MCF 10A (cell line): ENCODE measurements at regions of chrX and their contacts with region 1.

Region 1: DNA sequence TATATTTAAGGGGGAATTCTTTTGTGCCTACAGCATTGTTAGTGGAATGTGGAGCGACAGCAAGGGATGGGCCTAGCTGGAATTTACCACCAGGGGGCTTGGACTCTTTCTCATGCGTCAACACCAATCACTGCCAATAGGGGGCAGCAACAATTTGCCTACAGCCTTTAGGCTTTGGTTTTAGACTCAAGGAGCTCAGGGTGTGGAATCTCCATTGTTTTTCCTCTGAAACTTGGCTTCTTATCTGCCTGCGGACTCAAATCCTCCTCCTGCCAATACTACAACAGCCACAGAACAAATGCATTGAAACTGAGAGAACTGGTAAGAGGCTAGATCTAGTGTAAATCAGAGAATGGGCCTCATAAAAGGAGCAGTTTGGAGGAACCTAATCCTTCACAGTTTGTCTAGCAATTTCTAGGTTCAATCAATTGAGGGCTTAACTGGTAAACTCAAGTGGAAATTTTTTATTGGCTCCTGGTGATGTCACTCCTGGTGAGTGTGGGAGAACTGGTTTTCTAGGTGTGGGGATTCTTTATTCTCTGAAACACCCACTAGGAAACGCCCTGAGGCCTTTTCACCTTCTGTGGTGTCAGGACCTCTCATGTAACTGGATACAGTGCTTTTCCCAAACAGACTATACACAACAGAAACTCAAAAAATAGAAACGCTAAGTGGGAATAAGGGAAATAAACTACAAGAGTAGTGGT is 27.9 kb upstream of the TMSB4X start:
- DNase-seq: peak; percentile 91
- H3K4me3 Mint-ChIP-seq: no peak overlapping the region
- H3K27ac Mint-ChIP-seq: peak overlapping the region; percentile 80
- H3K4me1 Mint-ChIP-seq: peaks cover 12% of the 10 kb centered on the region
- H3K27me3 Mint-ChIP-seq: peaks cover 27% of the 10 kb centered on the region
- CTCF ChIP-seq: peak; percentile 98

Region 2: DNA sequence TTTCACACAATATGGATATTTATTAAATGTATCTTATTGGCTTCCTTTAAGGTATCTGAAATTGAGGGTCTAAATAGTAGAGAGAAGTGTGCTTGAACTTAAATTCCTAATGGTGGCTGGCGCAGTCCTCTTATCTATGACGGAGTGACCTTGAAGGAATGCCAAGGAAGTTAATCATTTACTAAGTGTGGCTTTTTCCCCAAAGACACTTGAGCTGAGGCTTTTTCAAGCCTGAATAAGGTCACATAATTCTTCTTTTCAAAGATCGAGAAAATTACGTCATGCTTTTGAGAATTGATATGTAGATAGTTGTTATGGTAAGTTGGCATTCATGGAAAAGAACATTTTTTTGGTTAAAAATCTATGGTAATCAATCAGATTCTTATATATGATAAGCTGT is 167.5 kb before region 1 on chrX:
- CTCF ChIA-PET with region 1: no interaction called
- POLR2A ChIA-PET with region 1: no interaction called
- intact Hi-C with region 1: no loop called
- DNase-seq: no peak
- H3K4me3 Mint-ChIP-seq: no peak overlapping the region
- H3K27ac Mint-ChIP-seq: no peak overlapping the region
- H3K4me1 Mint-ChIP-seq: no peaks in the 10 kb centered on the region
- H3K27me3 Mint-ChIP-seq: peaks cover 72% of the 10 kb centered on the region
- CTCF ChIP-seq: no peak

Region 3: DNA sequence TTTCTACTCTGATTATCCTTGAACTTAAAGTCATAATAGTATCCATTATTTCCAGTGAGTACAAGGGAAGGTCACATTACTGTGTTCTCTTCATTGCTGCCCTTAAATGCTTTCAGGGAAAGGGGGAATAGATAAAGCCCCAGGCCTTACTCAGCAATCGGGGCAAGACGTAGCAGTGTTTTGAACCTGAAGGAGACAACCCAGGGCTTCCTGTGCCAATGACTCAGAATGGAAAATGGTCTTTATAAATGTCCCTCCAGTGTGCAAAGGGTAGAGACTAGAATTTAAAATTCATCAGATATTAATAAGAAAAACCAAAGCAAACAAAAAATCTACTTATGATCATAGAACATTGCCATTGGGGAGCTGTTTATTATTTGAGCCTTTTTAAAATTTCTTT is 16.8 kb before region 1 on chrX:
- CTCF ChIA-PET with region 1: interaction called, 10 read pairs
- POLR2A ChIA-PET with region 1: no interaction called
- intact Hi-C with region 1: no loop called
- DNase-seq: no peak
- H3K4me3 Mint-ChIP-seq: no peak overlapping the region
- H3K27ac Mint-ChIP-seq: no peak overlapping the region
- H3K4me1 Mint-ChIP-seq: no peaks in the 10 kb centered on the region
- H3K27me3 Mint-ChIP-seq: peaks cover 19% of the 10 kb centered on the region
- CTCF ChIP-seq: no peak

Region 4: DNA sequence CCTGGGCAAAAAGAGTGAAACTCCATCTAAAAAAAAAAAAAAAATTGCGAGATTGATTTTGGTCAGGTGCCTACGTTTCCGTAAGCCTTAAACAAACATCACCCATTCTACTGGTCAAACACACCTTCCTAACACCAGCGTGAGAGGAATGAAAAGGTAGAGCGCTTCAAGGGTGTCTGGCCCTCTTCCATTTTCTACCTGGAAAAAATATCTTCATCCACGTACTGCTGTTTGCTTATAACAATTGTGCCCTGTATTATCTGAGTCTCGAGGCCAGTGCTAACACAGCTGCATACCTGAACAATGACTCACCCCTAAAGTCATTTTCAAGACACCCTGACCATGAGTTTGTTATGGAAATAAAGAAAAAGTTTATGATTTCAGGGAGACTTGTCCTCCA is 41.8 kb after region 1 on chrX:
- CTCF ChIA-PET with region 1: interaction called, 11 read pairs
- POLR2A ChIA-PET with region 1: no interaction called
- intact Hi-C with region 1: no loop called
- DNase-seq: peak; percentile 88
- H3K4me3 Mint-ChIP-seq: peak overlapping the region; percentile 59
- H3K27ac Mint-ChIP-seq: peak overlapping the region; percentile 42
- H3K4me1 Mint-ChIP-seq: peaks cover 26% of the 10 kb centered on the region
- H3K27me3 Mint-ChIP-seq: peaks cover 13% of the 10 kb centered on the region
- CTCF ChIP-seq: no peak

Region 5: DNA sequence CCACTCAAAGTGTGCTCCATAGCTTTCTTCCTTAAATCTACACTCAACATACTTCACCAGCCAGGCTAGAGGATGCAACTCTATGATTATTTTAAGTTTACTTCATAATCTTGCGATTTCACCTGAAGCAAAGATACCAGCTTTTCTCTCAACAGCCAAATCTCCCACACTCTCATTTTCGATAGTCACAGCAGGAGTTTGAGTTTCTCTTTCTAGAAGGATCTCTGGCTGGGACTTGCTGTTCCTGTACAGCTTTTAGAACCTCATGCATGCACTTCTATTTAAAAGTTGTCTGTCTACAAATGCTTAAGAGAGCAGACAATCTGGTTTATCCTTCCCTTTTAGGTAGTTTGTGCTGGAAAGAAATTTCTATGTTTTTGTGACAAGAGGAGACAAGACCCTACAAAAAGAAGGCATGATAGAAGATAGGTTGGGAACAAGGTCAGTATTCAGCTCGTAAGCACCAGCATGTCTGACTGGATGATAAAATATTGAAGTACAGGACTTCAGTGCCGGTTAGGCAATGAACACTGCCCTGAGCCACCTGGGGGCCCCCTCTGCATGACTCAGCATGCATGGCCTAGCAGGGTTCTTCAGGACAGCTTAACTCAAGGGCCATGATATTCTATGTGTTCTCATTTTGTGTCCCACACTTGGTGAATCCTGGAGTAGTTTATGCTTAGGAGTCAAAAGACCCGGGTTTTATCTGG is 307.2 kb after region 1 on chrX:
- CTCF ChIA-PET with region 1: interaction called, 15 read pairs
- POLR2A ChIA-PET with region 1: no interaction called
- intact Hi-C with region 1: no loop called
- DNase-seq: peak; percentile 76
- H3K4me3 Mint-ChIP-seq: no peak overlapping the region
- H3K27ac Mint-ChIP-seq: no peak overlapping the region
- H3K4me1 Mint-ChIP-seq: no peaks in the 10 kb centered on the region
- H3K27me3 Mint-ChIP-seq: peaks cover 27% of the 10 kb centered on the region
- CTCF ChIP-seq: no peak

Region 6: GRCh38 chrX:13487731-13488523 is 540.9 kb after region 1 on chrX:
- CTCF ChIA-PET with region 1: interaction called, 241 read pairs
- POLR2A ChIA-PET with region 1: interaction called, 23 read pairs
- intact Hi-C with region 1: loop called (anchors 1 kb)
- DNase-seq: peak; percentile 84
- H3K4me3 Mint-ChIP-seq: no peak overlapping the region
- H3K27ac Mint-ChIP-seq: peak overlapping the region; percentile 96
- H3K4me1 Mint-ChIP-seq: peaks cover 36% of the 10 kb centered on the region
- H3K27me3 Mint-ChIP-seq: no peaks in the 10 kb centered on the region
- CTCF ChIP-seq: peak; percentile 73

Region 7: DNA sequence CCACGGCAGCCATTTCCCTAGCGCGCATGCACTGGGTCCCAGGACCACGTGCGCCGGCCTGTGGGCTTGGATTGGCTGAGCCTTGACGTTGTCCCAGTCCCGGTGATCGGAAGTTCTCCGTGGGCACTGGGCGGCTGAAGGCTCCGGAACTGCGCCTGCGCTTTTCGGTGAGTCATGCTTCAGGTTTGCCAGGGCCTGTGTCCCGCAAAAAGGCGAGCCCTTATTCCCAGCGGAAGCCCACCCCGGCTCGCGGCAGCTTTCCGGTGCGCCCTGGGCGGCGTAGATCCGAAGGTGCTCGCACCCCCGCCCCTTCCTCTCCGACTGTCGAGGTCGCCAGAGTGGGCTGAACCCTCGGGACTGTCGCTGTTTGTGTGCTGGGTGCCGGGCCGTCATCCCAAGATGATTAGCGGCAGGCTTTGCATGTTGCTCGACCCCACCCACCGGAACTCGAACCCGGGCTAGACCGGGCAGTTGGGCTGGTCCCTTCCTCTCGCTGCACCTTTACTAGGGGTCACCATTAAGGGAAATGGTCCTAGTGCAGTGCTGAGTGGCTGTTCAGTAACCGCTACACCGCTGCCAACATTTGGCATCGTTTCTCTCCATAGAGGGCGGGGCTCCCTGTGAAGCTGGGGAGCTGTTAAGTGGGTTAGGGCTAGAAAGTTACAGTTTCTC is 706.2 kb after region 1 on chrX and contains the start of gene TCEANC:
- CTCF ChIA-PET with region 1: no interaction called
- POLR2A ChIA-PET with region 1: no interaction called
- intact Hi-C with region 1: loop called (anchors 1 kb)
- DNase-seq: peak; percentile 98
- H3K4me3 Mint-ChIP-seq: peak within 1 kb of the TSS; percentile 89
- H3K27ac Mint-ChIP-seq: peak within 1 kb of the TSS; percentile 59
- H3K4me1 Mint-ChIP-seq: peaks cover 5% of the 10 kb centered on the region
- H3K27me3 Mint-ChIP-seq: peaks cover 20% of the 10 kb centered on the region
- CTCF ChIP-seq: no peak
- total RNA-seq, gene TCEANC: 4.0 TPM in 2 replicates